Sigmoid colon (tissue), 7 donors: ENCODE measurements at regions of chr11 and their contacts with region 1.

Region 1: DNA sequence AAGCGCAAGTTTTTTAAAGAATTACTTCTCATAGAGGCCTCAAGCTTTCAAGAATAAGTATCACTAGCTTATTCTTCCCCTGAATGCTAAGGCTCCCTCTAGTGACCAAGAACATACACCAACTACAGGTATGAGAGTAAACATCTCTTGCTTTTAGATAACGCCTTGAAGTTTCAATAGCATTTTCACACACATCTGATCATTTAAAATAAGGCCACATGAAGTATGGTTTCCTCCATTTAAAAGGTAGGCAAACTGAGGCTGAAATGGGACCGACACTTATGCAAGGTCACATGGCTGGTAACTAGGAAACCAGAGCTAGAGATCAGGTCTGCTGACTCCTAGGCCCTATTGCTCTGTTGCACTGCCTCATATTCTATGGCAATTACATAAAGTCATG is 66.5 kb downstream of the CCDC34 start:
- DNase-seq: no peak
- H3K4me3 ChIP-seq: no peak overlapping the region
- H3K27ac ChIP-seq: no peak overlapping the region
- H3K4me1 ChIP-seq: peaks cover 0 to 10% (median 2%) of the 10 kb centered on the region in 4 donors
- H3K27me3 ChIP-seq: no peaks in the 10 kb centered on the region
- CTCF ChIP-seq: peak; percentile 49 to 72 (median 62)
- EP300 ChIP-seq: no peak
- POLR2A ChIP-seq: no peak

Region 2: DNA sequence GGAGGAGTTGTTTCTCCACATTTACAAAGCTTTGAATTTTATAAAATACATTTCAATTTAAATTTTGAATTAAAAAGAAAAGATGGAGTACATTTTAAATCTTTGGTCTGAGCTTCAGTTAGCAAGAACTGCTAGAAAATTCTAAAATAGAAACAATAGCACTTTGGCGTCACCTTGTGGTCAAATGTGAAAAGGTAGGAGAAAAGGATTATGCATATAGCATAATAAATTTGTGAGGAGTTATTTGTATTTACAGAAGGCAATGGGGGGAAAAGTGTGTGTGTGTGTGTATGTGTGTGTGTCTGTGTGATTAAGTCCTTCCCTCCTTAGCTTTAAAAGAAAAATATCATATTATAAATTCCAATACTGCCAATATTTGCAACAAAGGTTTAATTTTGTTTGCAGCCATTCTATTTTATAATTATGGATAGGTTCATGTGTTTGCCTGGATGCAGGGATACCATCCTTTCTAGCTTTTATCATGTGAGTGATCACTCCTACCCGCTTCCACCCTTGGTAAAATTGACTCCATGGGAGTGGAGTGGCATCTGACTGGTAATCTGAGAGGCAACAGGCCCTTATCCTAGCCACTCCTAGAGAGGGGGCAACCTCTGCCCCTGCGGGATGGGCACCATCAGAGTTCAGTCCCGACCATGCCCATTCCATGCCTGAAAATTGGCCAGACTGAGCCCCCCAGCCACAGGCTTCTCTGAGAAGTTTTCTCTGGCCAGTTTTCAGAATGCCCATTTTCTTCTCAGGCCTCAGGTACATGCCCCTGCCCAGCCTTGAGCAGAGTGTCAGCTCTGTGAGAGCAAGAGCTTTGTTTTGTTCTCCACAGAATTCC is 189.7 kb after region 1 on chr11:
- intact Hi-C with region 1: loop called (anchors 5 kb)
- DNase-seq: no peak
- H3K4me3 ChIP-seq: no peak overlapping the region
- H3K27ac ChIP-seq: no peak overlapping the region
- H3K4me1 ChIP-seq: no peaks in the 10 kb centered on the region
- H3K27me3 ChIP-seq: no peaks in the 10 kb centered on the region
- CTCF ChIP-seq: peak; percentile 89 to 94 (median 90)
- EP300 ChIP-seq: no peak
- POLR2A ChIP-seq: no peak